MCF 10A (cell line): ENCODE measurements at regions of chr5 and their contacts with region 1.

Region 1: GRCh38 chr5:146426853-146427618 is 20.1 kb upstream of the TCERG1 start:
- DNase-seq: peak; percentile 66
- H3K4me3 Mint-ChIP-seq: no peak overlapping the region
- H3K27ac Mint-ChIP-seq: no peak overlapping the region
- H3K4me1 Mint-ChIP-seq: no peaks in the 10 kb centered on the region
- H3K27me3 Mint-ChIP-seq: no peaks in the 10 kb centered on the region
- CTCF ChIP-seq: peak; percentile 85

Region 2: DNA sequence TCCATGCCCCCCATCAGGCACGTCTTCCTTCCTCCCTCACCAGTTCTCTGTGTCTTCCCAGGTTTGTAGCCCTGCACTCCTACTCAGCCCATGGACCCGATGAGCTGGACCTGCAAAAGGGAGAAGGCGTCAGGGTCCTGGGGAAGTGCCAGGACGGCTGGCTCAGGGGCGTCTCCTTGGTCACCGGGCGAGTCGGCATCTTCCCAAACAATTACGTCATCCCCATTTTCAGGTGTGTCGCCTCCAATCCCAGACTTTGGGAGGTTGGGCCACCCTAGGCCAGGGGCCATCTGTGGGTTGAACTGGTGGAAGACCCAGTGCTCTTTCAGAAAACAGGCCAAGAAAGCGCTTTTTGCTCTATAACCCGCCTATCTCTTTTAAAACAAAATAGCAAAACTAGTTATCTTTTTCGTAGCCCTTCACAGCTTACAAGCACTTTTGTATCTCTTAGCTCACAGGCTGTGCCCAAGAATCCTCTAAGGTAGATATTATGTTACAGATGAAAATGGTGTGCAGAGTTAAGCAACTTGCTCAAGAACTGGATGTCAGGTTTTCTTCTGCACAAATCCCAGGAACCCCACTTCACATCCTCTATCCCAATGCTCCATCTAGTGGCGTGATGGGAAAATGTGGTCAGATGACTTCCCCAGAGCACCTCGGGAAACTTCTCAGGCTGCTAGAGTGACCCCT is 377.9 kb before region 1 on chr5:
- CTCF ChIA-PET with region 1: no interaction called
- POLR2A ChIA-PET with region 1: no interaction called
- intact Hi-C with region 1: loop called (anchors 5 kb)
- DNase-seq: peak; percentile 91
- H3K4me3 Mint-ChIP-seq: no peak overlapping the region
- H3K27ac Mint-ChIP-seq: peak overlapping the region; percentile 4
- H3K4me1 Mint-ChIP-seq: peaks cover 31% of the 10 kb centered on the region
- H3K27me3 Mint-ChIP-seq: no peaks in the 10 kb centered on the region
- CTCF ChIP-seq: peak; percentile 90

Region 3: DNA sequence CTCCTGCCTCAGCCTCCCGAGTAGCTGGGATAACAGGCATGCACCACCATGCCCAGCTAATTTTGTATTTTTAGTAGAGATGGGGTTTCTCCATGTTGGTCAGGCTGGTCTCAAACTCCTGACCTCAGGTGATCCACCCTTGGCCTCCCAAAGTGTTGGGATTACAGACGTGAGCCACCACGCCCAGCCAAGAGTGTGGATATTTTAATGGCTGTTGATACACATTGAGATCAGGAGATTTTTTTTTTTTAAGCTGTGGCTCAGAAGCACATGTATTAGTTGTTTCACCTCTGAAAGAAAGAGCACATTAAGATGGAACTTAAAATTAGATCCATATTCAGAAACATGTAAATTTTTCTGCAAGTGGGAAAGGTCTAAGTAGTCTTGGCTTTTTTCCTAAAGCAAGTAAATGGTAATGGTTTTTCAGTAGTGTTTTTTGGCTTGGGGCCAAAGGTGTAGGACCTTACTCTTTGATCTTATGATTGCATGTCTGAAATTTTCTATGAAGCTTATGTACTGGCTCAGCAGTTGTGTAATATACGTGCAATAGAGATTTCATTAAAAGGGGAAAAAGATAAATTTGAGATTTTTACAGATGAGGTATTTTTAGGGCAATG is 213.7 kb before region 1 on chr5:
- CTCF ChIA-PET with region 1: interaction called, 19 read pairs
- POLR2A ChIA-PET with region 1: no interaction called
- intact Hi-C with region 1: no loop called
- DNase-seq: peak; percentile 81
- H3K4me3 Mint-ChIP-seq: no peak overlapping the region
- H3K27ac Mint-ChIP-seq: no peak overlapping the region
- H3K4me1 Mint-ChIP-seq: peaks cover 23% of the 10 kb centered on the region
- H3K27me3 Mint-ChIP-seq: no peaks in the 10 kb centered on the region
- CTCF ChIP-seq: no peak

Region 4: GRCh38 chr5:146301626-146302025 is 125.4 kb before region 1 on chr5:
- CTCF ChIA-PET with region 1: interaction called, 15 read pairs
- POLR2A ChIA-PET with region 1: no interaction called
- intact Hi-C with region 1: no loop called
- DNase-seq: no peak
- H3K4me3 Mint-ChIP-seq: no peak overlapping the region
- H3K27ac Mint-ChIP-seq: peak overlapping the region; percentile 14
- H3K4me1 Mint-ChIP-seq: no peaks in the 10 kb centered on the region
- H3K27me3 Mint-ChIP-seq: peaks cover 16% of the 10 kb centered on the region
- CTCF ChIP-seq: no peak

Region 5: DNA sequence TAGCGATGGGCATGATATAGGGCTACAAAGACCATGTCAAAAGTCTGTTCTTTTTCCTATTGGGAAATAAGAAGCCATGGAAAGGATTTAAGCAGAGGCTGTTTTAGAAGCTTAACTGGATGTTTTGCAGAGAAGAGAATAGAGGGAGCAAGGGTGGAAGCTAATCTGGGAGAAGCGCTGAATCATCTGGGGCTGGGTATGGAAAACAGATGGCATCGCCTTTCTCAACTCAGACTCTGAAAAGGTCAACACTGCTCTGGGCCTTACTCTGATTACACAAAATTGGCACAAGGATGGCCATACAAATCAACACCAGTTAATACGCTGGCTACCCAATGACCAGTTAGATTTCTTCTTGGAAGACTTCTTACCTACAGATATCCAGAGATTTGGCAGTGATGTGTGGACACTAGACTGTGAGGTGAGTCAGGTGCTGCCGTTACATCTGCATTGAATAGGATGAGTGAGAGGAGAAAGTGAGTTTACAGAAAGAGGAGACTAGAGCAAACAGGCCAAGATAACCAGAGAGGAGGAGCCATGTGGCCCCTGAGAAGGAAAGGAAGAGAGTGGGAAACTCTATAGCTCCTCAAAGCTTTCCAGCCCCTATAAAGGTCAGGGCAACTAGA is 13.9 kb after region 1 on chr5:
- CTCF ChIA-PET with region 1: interaction called, 47 read pairs
- POLR2A ChIA-PET with region 1: no interaction called
- intact Hi-C with region 1: no loop called
- DNase-seq: no peak
- H3K4me3 Mint-ChIP-seq: no peak overlapping the region
- H3K27ac Mint-ChIP-seq: no peak overlapping the region
- H3K4me1 Mint-ChIP-seq: no peaks in the 10 kb centered on the region
- H3K27me3 Mint-ChIP-seq: no peaks in the 10 kb centered on the region
- CTCF ChIP-seq: no peak